Cardiac septum (tissue), 1 donor: ENCODE measurements at regions of chr1 and their contacts with region 1.

Region 1: DNA sequence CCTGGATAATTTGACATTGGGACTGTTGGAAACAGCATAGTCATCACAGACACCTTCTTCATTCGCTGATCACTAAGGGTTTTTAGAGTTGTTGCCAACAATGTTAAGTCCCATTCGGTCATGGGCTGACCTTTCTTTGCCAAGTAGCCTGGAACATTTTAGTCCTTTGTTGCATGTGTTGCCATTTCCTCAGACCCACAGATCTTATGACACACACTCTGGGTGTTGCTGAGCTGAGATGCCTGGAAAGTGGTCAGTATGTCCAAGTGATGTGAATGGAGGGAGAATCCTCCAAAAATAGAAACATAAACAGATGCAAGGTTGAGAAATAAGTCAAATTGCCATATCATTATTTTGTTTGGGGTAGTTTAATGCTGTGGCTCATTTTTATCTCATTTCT is 61.5 kb upstream of the GJA5 start:
- DNase-seq: no peak

Region 2: DNA sequence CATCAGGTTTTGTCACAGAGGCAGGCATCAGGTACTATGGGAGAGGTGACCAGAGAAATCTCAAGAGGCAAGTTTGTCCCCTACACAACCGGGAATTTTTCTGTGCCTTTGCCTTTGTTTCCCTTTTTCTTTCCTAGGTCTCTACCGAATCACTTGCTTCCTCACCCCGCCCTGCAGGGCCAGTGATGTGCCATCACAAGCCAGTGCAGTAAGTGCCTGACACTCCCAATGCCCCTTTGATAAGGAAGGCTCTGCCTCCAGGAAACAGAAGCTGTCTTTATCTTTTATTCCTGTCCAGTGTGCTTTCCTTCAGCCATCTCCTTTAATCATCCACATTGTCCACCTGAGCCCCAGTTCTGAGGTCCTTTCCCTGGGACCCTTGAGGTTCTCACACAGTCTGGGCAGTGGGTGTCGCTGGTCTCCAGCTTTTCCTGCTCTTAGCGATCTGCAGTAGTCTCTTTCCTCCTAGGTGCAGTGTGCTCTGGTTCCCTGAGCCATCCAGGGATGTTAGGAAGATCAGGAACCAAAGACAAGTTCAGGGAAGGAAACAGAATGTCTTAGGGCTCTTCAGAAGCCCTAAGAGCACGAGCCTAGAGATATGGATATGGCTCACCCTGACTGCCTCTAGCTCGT is 98.1 kb before region 1 on chr1:
- intact Hi-C with region 1: loop called (anchors 5 kb)
- DNase-seq: no peak

Region 3: GRCh38 chr1:147738739-147739476 is 83.0 kb before region 1 on chr1:
- intact Hi-C with region 1: loop called (anchors 2 kb)
- DNase-seq: no peak